ENCODE measurements at regions of chr11 and their contacts with region 1.

Region 1: GRCh38 chr11:65274735-65275682 is 13.2 kb downstream of the POLA2 start:
- ATAC-seq: peak; percentile 91 to 99 (median 96)
- H3K4me3 ChIP-seq: peak overlapping the region in 1 of 5 donors; percentile 4
- H3K27ac ChIP-seq: no peak overlapping the region
- H3K4me1 ChIP-seq: no peaks in the 10 kb centered on the region

Region 2: DNA sequence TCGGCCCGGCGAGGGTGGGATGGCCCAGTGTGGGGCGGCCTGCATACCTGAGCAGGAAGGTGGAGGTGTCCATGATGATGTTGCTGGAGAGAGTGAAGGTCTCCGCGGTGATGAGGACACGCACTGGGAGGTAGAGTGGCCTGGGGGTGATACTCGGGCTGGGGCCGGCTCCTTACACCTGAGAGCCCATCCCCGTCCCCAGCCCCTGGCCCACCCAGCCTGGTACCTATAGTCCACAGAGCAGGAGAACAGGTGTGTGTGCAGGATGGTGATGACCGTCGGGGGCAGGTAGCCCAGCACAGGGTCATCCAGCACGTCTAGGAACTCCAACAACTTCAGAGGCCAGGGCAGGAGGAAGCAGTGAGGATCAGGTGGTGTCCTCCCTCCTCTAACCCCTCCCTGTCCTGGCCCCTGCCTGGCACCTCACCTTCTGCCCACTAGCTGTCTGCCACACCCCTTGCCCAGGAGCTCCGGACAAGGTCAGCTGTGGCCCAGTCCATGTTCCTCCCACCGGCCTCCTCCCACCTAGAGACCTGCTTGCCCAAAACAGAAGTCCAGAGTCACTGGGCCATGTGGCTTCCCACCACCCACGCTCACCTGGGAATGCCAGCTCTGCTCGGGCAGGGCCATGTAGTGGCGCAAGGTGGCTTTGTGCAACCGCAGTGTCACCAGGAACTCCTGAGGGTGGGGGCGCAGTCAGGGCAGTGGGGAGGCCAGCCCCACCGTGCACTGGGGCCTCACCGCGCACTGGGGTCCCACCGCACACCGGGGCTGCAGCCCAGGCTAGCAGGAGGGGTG is 369.3 kb before region 1 on chr11:
- in situ Hi-C with region 1: no loop called
- ATAC-seq: peak in 1 of 8 experiments; percentile 3
- H3K4me3 ChIP-seq: no peak overlapping the region
- H3K27ac ChIP-seq: no peak overlapping the region
- H3K4me1 ChIP-seq: no peaks in the 10 kb centered on the region

Region 3: GRCh38 chr11:65329944-65330403 is 55.0 kb after region 1 on chr11:
- in situ Hi-C with region 1: loop called in 3 of 9 experiments (anchors 5 to 10 kb)
- ATAC-seq: peak; percentile 13 to 42 (median 25)
- H3K4me3 ChIP-seq: no peak overlapping the region
- H3K27ac ChIP-seq: no peak overlapping the region
- H3K4me1 ChIP-seq: peaks cover 2 to 4% of the 10 kb centered on the region in 2 donors